Dendritic cell treated with granulocyte-macrophage colony-stimulating factor and Interleukin-4, amounts not matched to agents 40 ng/mL and 50 ng/mL, for 4 days (primary cell): ENCODE measurements at regions of chr15 and their contacts with region 1.

Region 1: DNA sequence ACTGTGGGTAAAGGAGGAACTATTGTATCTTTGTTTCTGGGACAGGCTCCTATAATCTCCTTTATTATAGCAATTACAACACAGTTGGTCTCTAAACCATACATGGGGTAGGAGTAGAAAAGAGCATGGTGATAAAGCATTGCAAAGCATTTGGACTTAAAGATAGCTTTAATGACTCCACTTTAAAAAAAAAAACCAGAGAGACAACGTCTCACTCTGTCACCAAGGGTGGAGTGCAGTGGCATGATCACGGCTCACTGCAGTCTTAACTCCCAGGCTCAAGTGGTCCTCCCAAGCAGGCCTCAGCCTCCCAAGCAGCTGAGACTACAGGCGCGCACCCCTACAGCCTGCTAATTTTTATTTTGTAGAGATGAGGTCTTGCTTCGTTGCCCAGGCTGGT is 68.2 kb downstream of the DENND4A start:
- H3K4me3 Mint-ChIP-seq: no peak overlapping the region
- H3K27ac Mint-ChIP-seq: no peak overlapping the region
- H3K4me1 Mint-ChIP-seq: no peaks in the 10 kb centered on the region
- H3K27me3 Mint-ChIP-seq: no peaks in the 10 kb centered on the region

Region 2: DNA sequence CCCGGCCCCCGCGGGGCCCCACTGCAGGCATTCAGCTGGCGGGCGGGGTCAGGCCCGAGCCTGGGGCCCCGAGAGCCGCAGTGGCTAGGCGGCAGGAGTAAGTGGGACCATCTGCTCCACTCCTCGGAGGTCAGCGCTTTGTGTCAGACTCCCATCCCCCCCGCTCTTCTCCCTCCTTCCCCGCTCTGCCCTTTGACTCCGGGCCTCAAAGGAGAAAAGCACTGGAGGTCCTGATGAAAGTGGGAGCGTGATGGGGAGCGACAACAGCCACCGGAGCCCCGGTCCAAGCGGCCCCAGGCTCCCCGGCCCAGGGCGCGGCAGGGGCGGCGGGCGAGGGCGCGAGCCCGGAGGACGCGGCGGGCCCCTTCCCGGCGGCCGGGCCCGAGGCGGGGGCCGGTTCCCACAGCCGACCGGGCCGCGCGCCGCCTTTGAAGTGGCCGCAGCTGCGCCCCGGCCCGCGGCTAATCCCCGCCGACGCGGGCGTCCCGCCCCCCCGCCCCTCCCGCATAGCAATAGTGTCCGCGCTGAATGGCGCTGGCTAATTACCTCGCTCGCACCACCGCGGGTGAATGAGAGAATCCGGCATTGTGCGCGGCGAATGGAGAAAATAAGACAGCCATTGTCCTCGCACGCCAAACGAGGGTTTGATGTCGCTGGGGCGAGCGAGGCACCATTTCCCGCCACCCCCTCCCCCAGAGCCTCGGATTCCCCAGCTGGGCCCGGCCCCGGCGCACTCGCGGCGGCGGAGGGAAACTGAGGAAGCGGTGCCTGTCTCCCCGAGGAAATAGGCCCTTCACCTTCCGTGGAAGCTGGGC is 368.5 kb before region 1 on chr15:
- intact Hi-C with region 1: no loop called
- H3K4me3 Mint-ChIP-seq: no peak overlapping the region
- H3K27ac Mint-ChIP-seq: no peak overlapping the region
- H3K4me1 Mint-ChIP-seq: no peaks in the 10 kb centered on the region
- H3K27me3 Mint-ChIP-seq: peaks cover 52% of the 10 kb centered on the region

Region 3: DNA sequence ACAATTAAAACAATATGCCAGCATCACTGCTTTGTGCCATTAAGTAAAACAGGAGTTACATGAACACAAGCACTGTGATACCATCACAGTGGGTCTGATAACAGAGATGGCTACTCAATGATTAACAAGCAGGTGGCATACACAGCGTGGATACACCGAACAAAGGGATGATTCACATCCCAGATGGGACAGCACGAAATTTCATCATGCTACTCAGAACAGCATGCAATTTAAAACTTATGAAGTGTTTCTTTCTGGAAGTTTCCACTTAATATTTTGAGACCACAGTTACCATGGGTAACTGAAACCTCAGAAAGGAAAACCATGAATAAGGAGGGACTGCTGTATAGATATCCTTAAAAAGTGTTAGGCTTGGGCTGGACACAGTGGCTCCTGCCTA is 57.6 kb before region 1 on chr15:
- intact Hi-C with region 1: loop called (anchors 10 kb)
- H3K4me3 Mint-ChIP-seq: no peak overlapping the region
- H3K27ac Mint-ChIP-seq: no peak overlapping the region
- H3K4me1 Mint-ChIP-seq: no peaks in the 10 kb centered on the region
- H3K27me3 Mint-ChIP-seq: no peaks in the 10 kb centered on the region

Region 4: DNA sequence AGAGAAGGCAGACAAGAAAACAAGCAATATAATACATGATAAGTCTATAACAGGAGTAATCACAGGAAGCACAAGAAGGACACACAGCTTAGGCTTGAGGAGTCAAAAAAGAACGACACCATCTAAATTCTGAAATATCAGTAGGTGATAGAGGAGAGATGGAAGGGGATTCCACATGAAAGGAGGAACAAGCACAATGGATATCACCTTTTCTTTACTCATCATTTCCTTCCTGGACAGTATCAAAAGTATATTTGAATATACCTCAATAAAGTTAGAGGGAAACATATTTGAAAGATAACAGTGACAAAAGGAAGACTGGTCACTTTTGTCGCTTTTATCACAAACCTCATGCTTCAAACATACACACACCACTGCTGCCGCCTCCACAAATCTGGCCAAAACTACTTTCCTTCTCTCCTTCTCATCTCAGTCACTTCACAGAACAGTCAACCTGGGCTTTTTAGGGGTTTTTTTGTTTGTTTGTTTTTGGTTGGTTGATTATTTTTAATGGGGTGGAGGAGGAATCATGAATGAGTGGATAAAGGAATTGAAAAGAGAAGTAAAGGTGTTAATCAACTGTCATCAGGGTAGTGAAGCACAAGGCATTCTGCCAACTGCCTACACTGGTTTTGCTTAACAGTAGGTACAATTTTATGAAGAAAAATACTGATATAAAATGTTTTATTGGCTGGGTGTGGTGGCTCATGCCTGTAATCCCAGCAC is 49.7 kb after region 1 on chr15:
- intact Hi-C with region 1: no loop called
- H3K4me3 Mint-ChIP-seq: no peak overlapping the region
- H3K27ac Mint-ChIP-seq: no peak overlapping the region
- H3K4me1 Mint-ChIP-seq: peaks cover 43% of the 10 kb centered on the region
- H3K27me3 Mint-ChIP-seq: no peaks in the 10 kb centered on the region